Ovary (tissue), 10 donors: ENCODE measurements at regions of chr5 and their contacts with region 1.

Region 1: GRCh38 chr5:147558826-147559225 is 49.0 kb upstream of the DPYSL3 start:
- DNase-seq: peak; percentile 62 to 80 (median 76)
- H3K4me3 ChIP-seq: no peak overlapping the region
- H3K27ac ChIP-seq: peak overlapping the region; percentile 15 to 20
- H3K4me1 ChIP-seq: peaks cover 6% of the 10 kb centered on the region
- H3K27me3 ChIP-seq: no peaks in the 10 kb centered on the region
- CTCF ChIP-seq: peak; percentile 22 to 65 (median 64)
- EP300 ChIP-seq: no peak
- POLR2A ChIP-seq: no peak

Region 2: GRCh38 chr5:146622391-146622790 is 936.4 kb before region 1 on chr5:
- intact Hi-C with region 1: no loop called
- DNase-seq: no peak
- H3K4me3 ChIP-seq: no peak overlapping the region
- H3K27ac ChIP-seq: no peak overlapping the region
- H3K4me1 ChIP-seq: no peaks in the 10 kb centered on the region
- H3K27me3 ChIP-seq: no peaks in the 10 kb centered on the region
- CTCF ChIP-seq: no peak
- EP300 ChIP-seq: no peak
- POLR2A ChIP-seq: no peak

Region 3: GRCh38 chr5:147223948-147224791 is 334.7 kb before region 1 on chr5:
- intact Hi-C with region 1: loop called in 2 of 4 experiments (anchors 5 kb)
- DNase-seq: peak in 3 of 5 donors; percentile 21 to 63 (median 53)
- H3K4me3 ChIP-seq: no peak overlapping the region
- H3K27ac ChIP-seq: no peak overlapping the region
- H3K4me1 ChIP-seq: no peaks in the 10 kb centered on the region
- H3K27me3 ChIP-seq: no peaks in the 10 kb centered on the region
- CTCF ChIP-seq: peak; percentile 26 to 71 (median 58)
- EP300 ChIP-seq: no peak
- POLR2A ChIP-seq: no peak

Region 4: DNA sequence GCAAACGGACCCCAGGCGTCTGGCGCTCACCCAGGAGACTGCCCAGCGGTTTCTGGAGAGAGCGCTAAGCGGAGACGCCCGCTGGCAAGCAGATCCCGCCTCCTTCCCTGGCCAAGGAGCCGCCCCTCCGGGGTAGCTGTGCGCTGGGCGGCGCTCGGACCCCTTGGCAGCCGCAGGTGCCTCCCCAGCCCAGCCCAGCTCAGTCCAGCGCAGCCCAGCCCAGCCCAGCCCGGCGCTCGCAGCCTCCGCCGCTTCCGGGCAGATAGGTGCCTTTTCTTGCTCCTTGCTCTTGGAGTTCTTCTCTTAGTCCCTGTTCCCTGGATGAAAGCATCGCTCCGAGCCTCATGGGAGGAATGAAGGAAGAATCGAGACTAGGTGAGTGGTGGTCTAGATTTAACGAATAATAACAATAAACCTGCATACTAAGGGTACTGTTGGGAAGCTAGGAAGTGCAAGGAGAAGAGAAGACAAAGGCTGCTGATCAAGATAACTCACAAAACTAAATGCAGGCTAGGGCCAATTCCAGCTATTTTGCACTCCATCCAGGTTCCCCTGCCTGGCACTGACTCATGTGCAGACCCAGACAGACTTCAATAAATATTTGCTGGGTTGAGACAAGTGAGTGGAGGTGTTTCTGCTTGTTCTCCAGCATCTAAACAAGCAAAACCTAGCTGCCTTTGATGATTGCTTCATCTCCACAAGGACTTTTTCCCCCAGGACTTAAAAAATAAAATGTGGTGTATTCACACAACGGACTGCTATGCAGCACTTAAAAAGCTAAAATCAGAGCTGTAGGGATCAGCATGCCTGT is 323.8 kb before region 1 on chr5 and contains the start of gene STK32A:
- intact Hi-C with region 1: loop called in 1 of 4 experiments (anchors 5 kb)
- DNase-seq: peak; percentile 59 to 79 (median 77)
- H3K4me3 ChIP-seq: peak within 1 kb of the TSS; percentile 72
- H3K27ac ChIP-seq: peak within 1 kb of the TSS; percentile 81 to 88
- H3K4me1 ChIP-seq: peaks cover 4% of the 10 kb centered on the region
- H3K27me3 ChIP-seq: no peaks in the 10 kb centered on the region
- CTCF ChIP-seq: no peak
- EP300 ChIP-seq: no peak
- POLR2A ChIP-seq: no peak
- total RNA-seq, gene STK32A: 1.8 to 9.0 (median 6.4) TPM

Region 5: DNA sequence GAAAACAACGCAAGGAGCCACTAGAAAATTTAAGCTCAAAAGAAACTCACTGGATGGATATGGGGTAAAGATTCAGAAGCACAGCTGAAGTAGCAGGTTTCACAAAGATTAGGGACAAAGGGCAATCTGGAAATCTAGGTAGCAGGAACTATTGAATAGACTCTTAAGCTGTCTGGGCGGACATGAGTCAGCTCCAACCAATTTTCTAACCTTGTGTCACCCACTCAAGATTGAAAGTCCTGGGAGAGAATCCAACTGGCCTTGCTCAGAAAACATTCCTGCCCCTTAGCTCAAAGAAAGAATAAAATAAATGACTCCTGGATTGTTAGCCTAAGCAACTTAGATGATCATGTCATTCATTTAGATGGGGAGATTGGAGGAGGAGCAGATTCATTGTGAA is 254.8 kb before region 1 on chr5:
- intact Hi-C with region 1: no loop called
- DNase-seq: no peak
- H3K4me3 ChIP-seq: no peak overlapping the region
- H3K27ac ChIP-seq: no peak overlapping the region
- H3K4me1 ChIP-seq: no peaks in the 10 kb centered on the region
- H3K27me3 ChIP-seq: no peaks in the 10 kb centered on the region
- CTCF ChIP-seq: no peak
- EP300 ChIP-seq: no peak
- POLR2A ChIP-seq: no peak

Region 6: DNA sequence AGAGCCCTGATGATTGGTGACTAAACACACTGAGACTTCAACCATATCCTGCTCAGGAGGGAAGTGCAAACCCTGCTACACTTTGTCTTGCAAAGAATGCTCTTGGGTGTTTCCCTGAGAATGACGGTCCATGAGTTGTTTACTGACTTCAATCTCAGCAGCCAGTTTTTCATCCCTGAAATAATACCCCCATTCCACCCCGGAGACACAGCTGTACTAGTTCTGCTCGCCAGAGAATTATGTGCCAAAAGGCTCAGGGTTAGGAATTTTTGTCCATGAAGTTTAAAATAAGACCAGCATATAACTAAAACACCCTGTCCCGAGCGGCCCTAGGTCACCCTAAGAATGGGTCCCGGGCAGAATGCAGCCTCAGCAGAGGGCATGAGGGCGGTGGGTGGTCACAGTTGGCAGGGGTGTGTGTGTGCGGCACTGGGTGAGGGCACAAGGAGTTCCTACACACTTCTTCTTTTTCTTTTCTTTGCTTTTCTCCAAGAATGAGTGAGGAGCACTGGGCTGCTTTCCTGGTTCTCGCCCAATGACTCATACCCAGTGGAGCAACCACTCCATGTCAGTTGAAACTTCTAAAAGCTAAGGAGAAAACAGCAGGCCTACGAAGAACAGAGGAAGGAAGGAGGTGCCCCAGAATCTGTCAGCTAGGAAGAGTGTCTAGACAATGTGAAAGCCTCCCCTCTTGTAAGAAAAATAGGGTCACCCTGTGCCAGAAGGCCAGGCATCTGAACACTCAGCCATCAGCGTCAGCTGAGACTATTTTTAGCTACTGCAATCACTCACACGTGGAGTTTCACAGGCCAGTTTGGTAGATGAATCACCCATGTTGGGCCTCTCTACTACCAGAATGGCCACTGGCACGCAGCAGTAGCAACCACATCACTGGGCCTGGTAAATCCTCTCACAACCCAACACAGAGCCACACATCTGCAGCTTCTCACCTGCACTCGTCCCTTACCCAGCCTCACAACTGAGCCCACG is 154.9 kb before region 1 on chr5:
- intact Hi-C with region 1: loop called in 1 of 4 experiments (anchors 5 kb)
- DNase-seq: peak; percentile 55 to 80 (median 65)
- H3K4me3 ChIP-seq: no peak overlapping the region
- H3K27ac ChIP-seq: peak overlapping the region; percentile 79 to 83
- H3K4me1 ChIP-seq: peaks cover 25% of the 10 kb centered on the region
- H3K27me3 ChIP-seq: no peaks in the 10 kb centered on the region
- CTCF ChIP-seq: no peak
- EP300 ChIP-seq: no peak
- POLR2A ChIP-seq: no peak